ENCODE measurements at regions of chr14 and their contacts with region 1.

Region 1: DNA sequence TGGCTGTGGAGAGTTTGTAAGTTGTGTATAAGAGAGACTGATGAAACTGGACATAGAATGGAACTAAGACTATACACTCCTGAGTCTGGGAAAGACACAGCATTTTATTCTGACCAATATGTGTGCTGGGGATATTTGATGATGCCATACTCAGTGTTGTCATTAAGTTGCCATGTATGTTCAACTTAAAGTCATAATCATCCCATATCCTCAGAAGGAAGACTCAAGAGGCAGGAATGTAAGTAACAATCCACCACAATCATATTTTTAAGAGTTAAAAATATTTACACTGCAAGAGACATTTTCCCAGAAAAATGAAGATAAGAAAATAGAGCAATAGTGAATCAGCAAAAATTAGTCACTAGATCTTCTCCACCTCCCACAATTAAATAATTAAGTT is 120.1 kb downstream of the MDGA2 start:
- DNase-seq: no peak
- ATAC-seq: no peak
- H3K4me3 ChIP-seq: no peak overlapping the region
- H3K27ac ChIP-seq: no peak overlapping the region
- H3K4me1 ChIP-seq: 0 out of 2 replicates have a peak, but pooled peaks cover 4% of the 10 kb centered on the region
- H3K27me3 ChIP-seq: no peaks in the 10 kb centered on the region
- CTCF ChIP-seq: no peak

Region 2: GRCh38 chr14:45868377-45868776 is 1687.0 kb before region 1 on chr14:
- CTCF ChIA-PET with region 1: no interaction called
- POLR2A ChIA-PET with region 1: no interaction called
- intact Hi-C with region 1: no loop called
- DNase-seq: no peak
- ATAC-seq: no peak
- H3K4me3 ChIP-seq: no peak overlapping the region
- H3K27ac ChIP-seq: no peak overlapping the region
- H3K4me1 ChIP-seq: no peaks in the 10 kb centered on the region
- H3K27me3 ChIP-seq: peaks cover 38% of the 10 kb centered on the region
- CTCF ChIP-seq: no peak

Region 3: GRCh38 chr14:47539031-47539461 is 16.3 kb before region 1 on chr14:
- CTCF ChIA-PET with region 1: no interaction called
- POLR2A ChIA-PET with region 1: no interaction called
- intact Hi-C with region 1: no loop called
- DNase-seq: peak; percentile 43
- ATAC-seq: peak; percentile 42; the same call in 1 of the 2 replicates
- H3K4me3 ChIP-seq: no peak overlapping the region
- H3K27ac ChIP-seq: no peak overlapping the region
- H3K4me1 ChIP-seq: no peaks in the 10 kb centered on the region
- H3K27me3 ChIP-seq: no peaks in the 10 kb centered on the region
- CTCF ChIP-seq: peak; percentile 65

Region 4: DNA sequence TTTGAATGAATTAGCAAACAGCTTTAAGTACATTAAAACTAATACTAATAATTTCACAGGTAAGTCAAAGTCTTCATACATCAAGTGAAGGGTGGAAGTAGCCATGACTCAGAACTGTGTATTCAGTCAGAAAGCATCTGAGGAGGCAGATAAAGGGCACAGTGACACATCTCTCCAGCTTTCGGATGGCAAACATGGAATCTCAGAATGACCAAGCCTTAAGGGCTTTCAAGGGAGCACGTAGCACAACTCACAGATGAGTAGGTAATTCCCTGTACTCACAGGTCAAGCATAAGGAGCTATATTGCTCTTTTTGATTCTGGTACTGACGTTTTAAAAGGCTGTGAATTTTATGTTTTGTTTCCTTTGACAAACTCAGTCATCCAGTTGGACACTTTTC is 64.1 kb after region 1 on chr14:
- CTCF ChIA-PET with region 1: no interaction called
- POLR2A ChIA-PET with region 1: no interaction called
- intact Hi-C with region 1: no loop called
- DNase-seq: peak; percentile 84
- ATAC-seq: peak; percentile 74
- H3K4me3 ChIP-seq: no peak overlapping the region
- H3K27ac ChIP-seq: peak overlapping the region; percentile 30
- H3K4me1 ChIP-seq: no peaks in the 10 kb centered on the region
- H3K27me3 ChIP-seq: no peaks in the 10 kb centered on the region; the same call in 1 of the 2 replicates
- CTCF ChIP-seq: no peak

Region 5: GRCh38 chr14:47710581-47710980 is 155.2 kb after region 1 on chr14:
- CTCF ChIA-PET with region 1: no interaction called
- POLR2A ChIA-PET with region 1: no interaction called
- intact Hi-C with region 1: no loop called
- DNase-seq: peak; percentile 68
- ATAC-seq: peak; percentile 81
- H3K4me3 ChIP-seq: no peak overlapping the region
- H3K27ac ChIP-seq: no peak overlapping the region
- H3K4me1 ChIP-seq: peaks cover 6% of the 10 kb centered on the region; the same call in 1 of the 2 replicates
- H3K27me3 ChIP-seq: no peaks in the 10 kb centered on the region
- CTCF ChIP-seq: no peak

Region 6: GRCh38 chr14:47722929-47723696 is 167.8 kb after region 1 on chr14:
- CTCF ChIA-PET with region 1: no interaction called
- POLR2A ChIA-PET with region 1: no interaction called
- intact Hi-C with region 1: loop called (anchors 5 kb)
- DNase-seq: no peak
- ATAC-seq: no peak
- H3K4me3 ChIP-seq: no peak overlapping the region
- H3K27ac ChIP-seq: no peak overlapping the region
- H3K4me1 ChIP-seq: no peaks in the 10 kb centered on the region
- H3K27me3 ChIP-seq: no peaks in the 10 kb centered on the region
- CTCF ChIP-seq: no peak

Measured in PC-3 (cell line).